ENCODE measurements at regions of chr11 and their contacts with region 1.

Region 1: GRCh38 chr11:65117216-65118096 is at the start of gene ZNHIT2:
- DNase-seq: peak; percentile 98 to 100 (median 100)

Region 2: GRCh38 chr11:64803163-64803845 is 314.2 kb before region 1 on chr11 and contains the start of gene MAP4K2:
- intact Hi-C with region 1: loop called (anchors 10 kb)
- DNase-seq: peak; percentile 71 to 94 (median 86)

Region 3: DNA sequence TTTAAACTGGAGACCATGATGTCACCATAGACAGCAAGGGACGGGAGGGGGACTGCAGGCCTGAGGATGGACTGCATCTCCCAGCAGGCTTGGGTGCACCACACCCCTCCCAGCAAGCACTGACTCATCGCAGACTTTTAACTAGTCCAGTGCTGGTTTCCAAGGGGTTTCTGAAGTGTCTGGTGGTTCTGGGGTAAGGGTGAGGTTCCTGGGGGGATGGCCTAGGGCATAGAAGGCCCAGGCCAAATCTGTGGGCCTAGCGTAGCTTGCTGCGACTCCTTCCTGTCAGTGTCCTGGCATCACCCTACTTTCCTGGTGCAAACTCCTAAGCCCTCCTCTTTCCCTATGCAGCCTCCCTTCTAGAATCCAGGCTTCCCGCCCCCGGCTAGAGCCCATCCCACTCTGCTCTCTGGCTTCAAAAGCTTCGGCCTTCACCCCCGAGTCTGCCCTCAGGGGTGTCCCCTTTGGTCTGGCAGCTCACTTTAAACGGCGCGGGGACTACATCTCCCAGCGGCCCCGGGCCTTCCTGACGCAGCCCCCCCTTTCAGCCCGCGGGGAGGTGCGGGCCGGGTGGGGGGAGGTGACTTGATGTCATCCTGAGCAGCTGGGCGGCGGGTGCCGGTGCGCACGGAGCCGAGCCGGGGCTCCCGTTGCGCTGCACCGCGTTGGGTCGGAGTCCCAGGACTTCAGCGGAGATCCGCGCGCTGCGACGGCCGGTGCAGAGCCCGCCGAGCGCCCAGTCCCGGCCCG is 193.2 kb before region 1 on chr11 and contains the start of gene PPP2R5B:
- intact Hi-C with region 1: loop called (anchors 10 kb)
- DNase-seq: peak; percentile 92 to 99 (median 97)

Region 4: GRCh38 chr11:65013692-65014145 is 103.7 kb before region 1 on chr11:
- intact Hi-C with region 1: loop called (anchors 2 kb)
- DNase-seq: peak; percentile 87 to 98 (median 95)

Region 5: GRCh38 chr11:65083834-65084597 is 33.4 kb before region 1 on chr11 and contains the starts of genes CDCA5 and ZFPL1:
- intact Hi-C with region 1: loop called (anchors 2 kb)
- DNase-seq: peak; percentile 93 to 99 (median 98)

Measured in head of caudate nucleus (tissue), 42 donors.